H1 (cell line): ENCODE measurements at regions of chr1 and their contacts with region 1.

Region 1: DNA sequence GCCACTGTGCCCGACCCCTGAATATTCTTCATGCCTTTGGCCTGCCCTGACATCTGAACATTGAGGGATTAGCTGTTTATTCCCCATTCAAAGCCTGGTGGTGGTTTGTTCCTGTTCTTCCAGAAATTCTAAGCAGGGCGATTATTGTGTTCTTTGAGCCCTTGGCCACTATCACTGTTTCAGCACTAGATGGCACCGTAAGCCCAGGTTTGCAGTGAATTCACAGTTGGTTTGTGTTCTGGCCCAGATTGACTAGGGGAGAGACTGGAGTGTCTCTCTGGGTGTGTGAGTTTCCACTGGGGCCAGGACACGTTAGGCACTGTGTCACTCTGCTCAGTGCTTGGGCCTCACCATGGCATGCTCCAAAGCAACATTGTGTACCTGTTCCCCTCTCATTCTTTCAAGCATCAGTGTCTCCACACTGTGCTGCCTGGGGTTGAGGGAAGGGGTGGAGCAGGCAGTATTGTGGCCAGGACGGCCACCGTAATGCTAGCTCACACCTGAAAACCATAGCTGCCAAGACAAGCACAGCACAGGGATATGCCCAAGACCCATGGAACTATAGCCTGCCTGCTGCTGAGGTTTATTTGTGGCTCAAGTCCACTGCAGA is 52.7 kb downstream of the PKN2 start:
- DNase-seq: peak; percentile 25 to 71
- H3K4me3 ChIP-seq: no peak overlapping the region
- H3K27ac ChIP-seq: no peak overlapping the region
- H3K4me1 ChIP-seq: peaks cover 0 to 10% (median 7%) of the 10 kb centered on the region in 4 experiments; a peak in 3 of 7 replicates
- H3K27me3 ChIP-seq: no peaks in the 10 kb centered on the region
- CTCF ChIP-seq: peak; percentile 47 to 92 (median 88)
- EP300 ChIP-seq: no peak
- POLR2A ChIP-seq: no peak
- RAD21 ChIP-seq: peak; percentile 98

Region 2: DNA sequence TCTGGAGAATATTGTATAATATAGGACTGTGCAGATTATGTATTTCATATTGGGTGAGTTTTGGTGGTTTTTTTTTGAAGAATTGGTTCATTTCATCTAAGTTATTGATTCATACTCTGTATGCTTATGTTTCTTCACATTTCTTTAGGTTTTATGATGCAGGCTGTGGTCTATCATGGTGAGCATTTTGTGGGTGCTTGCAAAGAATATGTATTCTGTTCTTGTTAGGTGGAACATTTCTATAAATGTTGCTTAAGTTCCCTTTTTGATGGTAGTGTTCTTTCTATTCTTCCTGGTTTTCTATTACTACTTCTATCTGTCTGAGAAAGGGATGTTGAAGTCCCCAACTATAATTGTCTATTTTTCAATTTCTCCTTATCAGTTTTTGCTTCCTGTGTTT is 10.0 kb before region 1 on chr1:
- CTCF ChIA-PET with region 1: interaction called, 12 read pairs
- POLR2A ChIA-PET with region 1: no interaction called
- DNase-seq: no peak
- H3K4me3 ChIP-seq: no peak overlapping the region
- H3K27ac ChIP-seq: no peak overlapping the region
- H3K4me1 ChIP-seq: peaks cover 0 to 8% (median 0%) of the 10 kb centered on the region in 4 experiments; a peak in 2 of 7 replicates
- H3K27me3 ChIP-seq: no peaks in the 10 kb centered on the region
- CTCF ChIP-seq: no peak
- EP300 ChIP-seq: no peak
- POLR2A ChIP-seq: no peak
- RAD21 ChIP-seq: no peak

Region 3: GRCh38 chr1:88763649-88764406 is 27.1 kb after region 1 on chr1:
- CTCF ChIA-PET with region 1: interaction called, 19 read pairs
- POLR2A ChIA-PET with region 1: no interaction called
- DNase-seq: no peak
- H3K4me3 ChIP-seq: no peak overlapping the region
- H3K27ac ChIP-seq: no peak overlapping the region
- H3K4me1 ChIP-seq: peaks cover 0 to 4% (median 3%) of the 10 kb centered on the region in 4 experiments; a peak in 3 of 7 replicates
- H3K27me3 ChIP-seq: no peaks in the 10 kb centered on the region
- CTCF ChIP-seq: no peak
- EP300 ChIP-seq: no peak
- POLR2A ChIP-seq: no peak
- RAD21 ChIP-seq: no peak